ENCODE measurements at regions of chr3 and their contacts with region 1.

Region 1: DNA sequence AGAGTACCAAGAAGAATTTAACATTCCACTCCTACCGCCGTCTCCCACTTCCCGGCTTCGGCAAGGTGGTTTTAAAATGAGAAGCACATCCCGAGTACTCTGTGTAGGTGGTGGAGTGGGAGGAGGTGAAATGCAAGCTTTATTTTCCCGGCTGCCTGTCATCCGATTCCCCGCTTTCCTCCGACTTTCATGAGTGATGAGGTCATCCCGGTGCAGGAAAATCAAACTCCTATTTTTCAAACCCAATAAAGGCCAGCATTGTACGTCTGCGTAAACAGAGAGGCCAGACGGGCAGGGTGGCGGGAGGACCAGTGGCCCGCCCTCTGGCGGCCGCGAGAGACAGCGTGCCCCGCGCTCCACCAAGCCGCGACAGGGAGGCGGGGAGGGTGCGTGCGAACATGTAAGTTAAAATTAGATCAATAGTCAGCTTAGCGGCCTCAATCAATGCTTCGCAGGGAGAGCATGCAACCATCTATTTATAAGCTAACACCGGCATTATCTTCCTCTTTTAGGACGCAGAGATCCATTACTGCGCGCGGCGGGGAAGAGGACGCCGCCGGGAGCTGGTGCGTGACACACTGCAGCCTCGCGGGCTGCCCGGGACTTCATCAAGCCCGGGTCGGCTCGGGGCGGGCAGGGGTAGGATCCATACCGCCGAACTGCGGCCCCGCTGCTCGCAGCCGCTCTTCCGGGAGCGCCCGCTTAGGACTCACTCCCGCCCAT is 163.3 kb downstream of the CD47 start:
- DNase-seq: peak; percentile 86
- ATAC-seq: peak; percentile 92
- H3K4me3 Mint-ChIP-seq: peak overlapping the region; percentile 73
- H3K27ac Mint-ChIP-seq: peak overlapping the region; percentile 76
- H3K4me1 Mint-ChIP-seq: peaks cover 9% of the 10 kb centered on the region
- H3K27me3 Mint-ChIP-seq: peaks cover 4% of the 10 kb centered on the region

Region 2: GRCh38 chr3:107574650-107575049 is 352.9 kb before region 1 on chr3:
- CTCF ChIA-PET with region 1: no interaction called
- POLR2A ChIA-PET with region 1: no interaction called
- intact Hi-C with region 1: loop called in 1 of 2 experiments (anchors 5 kb)
- DNase-seq: no peak
- ATAC-seq: no peak
- H3K4me3 Mint-ChIP-seq: no peak overlapping the region
- H3K27ac Mint-ChIP-seq: no peak overlapping the region
- H3K4me1 Mint-ChIP-seq: peaks cover 26% of the 10 kb centered on the region
- H3K27me3 Mint-ChIP-seq: no peaks in the 10 kb centered on the region

Region 3: GRCh38 chr3:107938143-107938542 is 10.6 kb after region 1 on chr3:
- CTCF ChIA-PET with region 1: interaction called, 27 read pairs
- POLR2A ChIA-PET with region 1: no interaction called
- intact Hi-C with region 1: no loop called
- DNase-seq: peak; percentile 17
- ATAC-seq: no peak
- H3K4me3 Mint-ChIP-seq: no peak overlapping the region
- H3K27ac Mint-ChIP-seq: no peak overlapping the region
- H3K4me1 Mint-ChIP-seq: peaks cover 22% of the 10 kb centered on the region
- H3K27me3 Mint-ChIP-seq: peaks cover 5% of the 10 kb centered on the region

Region 4: DNA sequence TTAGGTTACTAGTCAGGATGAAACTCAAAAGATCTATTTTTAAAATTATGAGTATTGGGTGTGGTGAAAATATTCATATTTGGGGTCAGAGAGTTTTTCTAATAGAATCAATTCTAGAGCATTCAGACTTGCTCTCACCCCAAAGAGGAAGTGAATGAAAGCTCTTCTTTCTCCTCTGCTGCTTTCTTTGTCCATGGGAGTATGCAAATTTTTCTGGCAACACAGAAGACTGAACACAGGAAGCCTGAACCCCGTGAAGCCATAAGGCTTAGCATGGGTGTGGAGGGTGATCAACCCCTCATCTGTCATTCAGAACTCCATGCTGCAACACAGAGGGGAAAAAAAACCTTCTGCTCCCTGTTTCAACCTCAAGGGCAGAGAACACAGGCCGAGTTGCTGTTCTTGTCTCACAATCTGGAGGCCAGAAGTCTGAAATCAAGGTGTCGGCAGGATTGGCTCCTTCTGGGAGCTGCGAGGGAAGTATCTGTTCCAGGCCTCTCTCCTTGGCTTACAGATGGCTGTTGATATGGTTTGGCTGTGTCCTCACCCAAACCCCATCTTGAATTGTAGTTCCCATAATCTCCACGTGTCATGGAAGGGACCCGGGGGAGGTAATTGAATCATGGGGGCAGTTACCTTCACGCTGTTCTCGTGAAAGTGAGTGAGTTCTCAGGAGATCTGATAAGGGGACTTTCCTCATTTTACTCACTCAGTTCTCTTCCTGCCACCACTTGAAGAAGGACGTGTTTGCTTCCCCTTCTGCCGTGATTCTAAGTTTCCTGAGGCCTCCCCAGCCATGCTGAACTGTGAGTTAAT is 197.0 kb after region 1 on chr3:
- CTCF ChIA-PET with region 1: no interaction called
- POLR2A ChIA-PET with region 1: no interaction called
- intact Hi-C with region 1: loop called in 1 of 2 experiments (anchors 5 kb)
- DNase-seq: peak; percentile 82
- ATAC-seq: peak; percentile 70
- H3K4me3 Mint-ChIP-seq: peak overlapping the region; percentile 93
- H3K27ac Mint-ChIP-seq: peak overlapping the region; percentile 96
- H3K4me1 Mint-ChIP-seq: peaks cover 62% of the 10 kb centered on the region
- H3K27me3 Mint-ChIP-seq: no peaks in the 10 kb centered on the region

Region 5: DNA sequence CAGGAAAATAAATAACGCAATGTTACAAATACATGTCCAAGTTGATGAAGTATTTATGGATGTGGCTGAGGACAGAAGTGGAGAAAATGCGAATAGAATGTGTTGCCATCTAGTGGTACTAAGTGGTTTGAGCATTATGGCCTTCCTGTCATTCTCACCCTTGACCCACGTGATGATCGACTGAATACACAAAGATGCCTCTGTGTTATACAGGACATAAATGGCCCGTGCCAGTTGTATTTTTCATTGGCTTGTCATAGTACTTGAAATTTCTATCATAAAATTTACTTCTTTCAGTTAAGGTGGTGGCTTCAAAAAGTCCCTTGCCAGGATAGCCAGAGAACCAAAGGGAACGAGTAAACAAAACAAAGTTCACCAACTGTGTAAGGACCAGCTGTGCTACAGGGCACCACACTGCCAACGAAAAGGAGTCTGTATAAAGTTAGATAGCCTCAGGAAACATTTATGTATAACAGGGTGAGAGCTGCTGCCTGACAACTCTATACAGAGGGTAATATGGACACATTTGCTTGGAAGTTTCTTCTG is 479.2 kb after region 1 on chr3:
- CTCF ChIA-PET with region 1: interaction called, 8 read pairs
- POLR2A ChIA-PET with region 1: no interaction called
- intact Hi-C with region 1: loop called in 1 of 2 experiments (anchors 5 kb)
- DNase-seq: peak; percentile 35
- ATAC-seq: peak; percentile 96
- H3K4me3 Mint-ChIP-seq: no peak overlapping the region
- H3K27ac Mint-ChIP-seq: no peak overlapping the region
- H3K4me1 Mint-ChIP-seq: peaks cover 10% of the 10 kb centered on the region
- H3K27me3 Mint-ChIP-seq: no peaks in the 10 kb centered on the region